Heart left ventricle (tissue), 16 donors: ENCODE measurements at regions of chr11 and their contacts with region 1.

Region 1: GRCh38 chr11:96162816-96163499 is 180.0 kb downstream of the MAML2 start:
- DNase-seq: peak in 4 of 5 donors; percentile 35 to 56 (median 47)
- ATAC-seq: peak; percentile 68 to 92 (median 91)
- H3K4me3 ChIP-seq: no peak overlapping the region
- H3K27ac ChIP-seq: peak overlapping the region in 11 of 12 donors; percentile 29 to 83 (median 60)
- H3K4me1 ChIP-seq: peaks cover 0 to 55% (median 21%) of the 10 kb centered on the region in 12 donors
- H3K27me3 ChIP-seq: no peaks in the 10 kb centered on the region
- CTCF ChIP-seq: no peak
- POLR2A ChIP-seq: no peak

Region 2: GRCh38 chr11:96207459-96208449 is 44.8 kb after region 1 on chr11:
- intact Hi-C with region 1: loop called in 5 of 10 experiments (anchors 5 to 10 kb)
- DNase-seq: no peak
- ATAC-seq: peak in 3 of 4 donors; percentile 57 to 87 (median 65)
- H3K4me3 ChIP-seq: peak overlapping the region in 1 of 12 donors; percentile 4
- H3K27ac ChIP-seq: peak overlapping the region; percentile 8 to 87 (median 40)
- H3K4me1 ChIP-seq: peaks cover 0 to 73% (median 27%) of the 10 kb centered on the region in 12 donors
- H3K27me3 ChIP-seq: no peaks in the 10 kb centered on the region
- CTCF ChIP-seq: no peak
- POLR2A ChIP-seq: no peak